GM13977 (cell line): ENCODE measurements at regions of chrX and their contacts with region 1.

Region 1: DNA sequence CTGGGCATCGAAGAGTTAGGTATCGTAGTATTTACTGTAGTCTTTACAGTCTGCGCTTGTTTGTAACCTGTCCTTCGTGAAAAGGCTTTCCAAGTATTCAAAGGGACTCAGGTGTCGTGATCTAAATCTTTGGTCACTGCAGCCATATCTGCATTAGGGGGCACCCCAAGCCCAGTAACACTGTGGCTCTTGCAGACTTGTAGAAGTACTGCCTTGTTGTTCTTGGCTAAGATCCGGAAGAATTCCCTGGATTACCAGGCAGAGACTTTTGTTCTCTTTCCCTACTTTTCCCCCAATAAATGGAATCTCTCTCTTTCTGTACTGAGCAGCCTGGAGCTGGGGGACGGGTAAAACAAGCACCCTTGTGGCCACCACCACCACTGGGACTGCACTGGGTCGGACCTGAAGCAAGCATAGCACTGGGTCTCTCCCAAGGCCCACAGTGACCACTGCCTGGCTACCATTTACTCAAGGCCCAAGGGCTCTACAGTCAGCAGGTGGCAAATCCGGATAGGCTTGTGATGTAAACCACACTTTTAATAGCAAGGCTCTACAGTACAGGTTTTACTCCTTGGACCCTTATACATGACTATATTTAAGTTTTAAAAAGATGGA is 12.0 kb downstream of the CXorf58 start:
- DNase-seq: no peak
- CTCF ChIP-seq: no peak

Region 2: DNA sequence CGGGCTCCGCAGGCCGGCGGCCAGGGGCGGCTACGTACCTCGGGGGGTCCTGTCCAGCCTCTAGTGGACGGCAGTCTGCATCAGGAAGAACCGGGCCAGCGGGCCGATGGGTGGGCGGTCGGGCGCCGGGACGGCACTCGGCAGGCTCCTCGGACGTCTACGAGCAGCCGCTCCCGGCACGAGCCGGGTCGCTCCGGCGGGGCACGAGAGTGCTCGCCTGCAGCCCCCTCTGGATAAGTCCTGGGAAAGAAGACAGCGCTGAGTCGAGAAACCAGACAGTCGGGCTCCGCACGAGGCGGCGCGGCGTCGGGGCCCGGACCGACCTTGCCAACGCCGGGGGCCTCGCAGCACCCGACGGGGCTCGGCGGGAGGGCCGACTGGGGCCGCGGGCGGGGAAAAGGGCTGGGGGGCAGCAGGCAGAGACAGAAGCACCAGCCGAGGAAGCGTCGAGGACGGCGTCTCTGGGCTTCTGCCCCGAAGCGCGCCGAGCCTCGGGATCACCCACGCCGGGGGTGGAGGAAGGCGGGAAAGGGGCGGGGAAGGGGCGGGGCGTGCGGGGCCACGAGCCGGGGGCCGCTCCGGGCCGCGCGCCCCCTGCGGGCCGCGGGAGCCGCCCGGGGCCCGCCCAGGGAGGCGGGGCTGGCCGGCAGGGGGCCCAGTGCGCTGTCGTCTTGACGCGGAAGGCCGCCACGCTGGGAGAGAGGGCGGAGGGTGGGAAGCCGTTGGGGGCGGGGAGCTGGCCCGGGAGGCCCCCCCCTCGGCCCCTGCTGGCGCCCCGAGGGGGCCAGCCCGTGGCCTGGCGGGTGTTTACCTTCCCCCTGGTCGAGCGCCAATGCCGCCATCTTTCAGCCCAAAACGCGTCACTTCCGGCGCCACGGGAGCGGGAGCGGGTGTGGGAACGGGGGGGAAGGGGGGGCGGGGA is 105.3 kb after region 1 on chrX:
- in situ Hi-C with region 1: loop called (anchors 10 kb)
- DNase-seq: peak; percentile 90
- CTCF ChIP-seq: peak; percentile 47